GM10248 (cell line): ENCODE measurements at regions of chr11 and their contacts with region 1.

Region 1: DNA sequence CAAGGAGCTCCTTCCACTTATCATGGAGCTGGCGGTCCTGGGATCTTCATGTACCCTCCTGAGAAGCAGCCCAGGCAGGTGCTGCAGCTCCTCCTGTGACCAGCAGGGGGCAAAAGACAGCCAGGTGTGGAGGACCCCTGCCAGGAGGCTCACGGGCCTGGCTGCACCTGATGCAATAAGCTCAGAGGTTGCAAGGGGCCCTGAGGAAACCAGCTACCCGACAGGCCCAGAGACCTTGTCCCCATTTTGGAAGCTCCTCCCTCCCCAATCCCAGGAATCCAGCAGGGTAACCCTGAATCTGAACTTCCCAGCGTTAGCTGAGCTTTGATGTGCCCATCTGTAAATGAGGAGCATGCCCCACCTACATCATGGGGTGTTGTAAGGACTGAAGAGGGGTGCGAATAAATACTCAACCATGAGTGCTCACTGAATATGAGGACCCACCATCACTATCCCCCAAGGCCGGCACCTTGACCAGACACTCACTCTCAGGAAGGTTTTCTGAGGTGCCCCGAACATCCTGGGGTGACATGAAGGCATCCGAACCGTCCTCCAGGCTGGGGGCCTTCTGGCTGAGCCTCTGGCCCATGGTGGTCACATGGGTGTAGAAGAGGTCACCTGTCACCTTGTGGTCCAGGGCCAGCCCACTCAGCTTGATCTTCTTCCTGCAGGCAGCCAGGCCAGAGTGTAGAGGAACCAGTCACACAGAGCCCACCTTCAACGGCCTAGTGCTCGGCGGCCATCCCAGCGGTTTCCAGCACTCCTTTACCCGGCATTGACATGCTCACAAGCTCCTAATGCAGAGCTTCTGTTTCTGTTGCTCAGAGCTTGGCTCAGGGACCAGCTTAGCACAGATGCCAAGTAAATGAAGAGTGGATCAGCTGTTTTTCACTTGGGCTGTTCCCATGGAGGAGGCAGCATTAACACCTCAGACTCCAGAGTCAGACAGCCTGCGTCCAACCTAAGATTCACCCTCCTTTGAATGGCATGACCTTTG is 21.7 kb downstream of the SLC43A1 start:
- DNase-seq: peak; percentile 81
- CTCF ChIP-seq: peak; percentile 96

Region 2: DNA sequence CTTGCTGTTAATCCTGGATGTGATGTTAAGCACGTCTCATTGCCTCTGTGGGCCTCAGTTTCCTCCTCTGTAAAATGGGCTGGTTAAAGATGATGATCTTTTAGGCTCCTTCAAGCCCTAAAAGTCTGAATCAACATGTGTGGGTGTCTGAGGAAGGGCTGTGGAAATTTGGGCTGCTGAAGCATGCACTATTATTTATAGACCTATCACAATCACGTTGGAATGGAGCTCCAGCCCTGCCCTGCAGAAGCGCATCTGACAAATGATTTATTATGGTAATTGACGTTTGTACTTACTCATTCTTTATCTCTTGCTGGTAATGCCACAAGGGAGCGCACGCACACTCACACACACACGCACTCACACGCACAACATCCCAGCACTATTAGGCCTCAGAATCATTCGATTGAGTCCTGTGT is 135.3 kb before region 1 on chr11:
- CTCF ChIA-PET with region 1: interaction called, 13 read pairs
- POLR2A ChIA-PET with region 1: no interaction called
- DNase-seq: no peak
- CTCF ChIP-seq: no peak

Region 3: GRCh38 chr11:57456960-57457642 is 36.7 kb before region 1 on chr11:
- CTCF ChIA-PET with region 1: interaction called, 40 read pairs
- POLR2A ChIA-PET with region 1: no interaction called
- DNase-seq: peak; percentile 83
- CTCF ChIP-seq: peak; percentile 100

Region 4: GRCh38 chr11:57480409-57481137 is 13.2 kb before region 1 on chr11:
- CTCF ChIA-PET with region 1: interaction called, 75 read pairs
- POLR2A ChIA-PET with region 1: no interaction called
- DNase-seq: peak; percentile 80
- CTCF ChIP-seq: peak; percentile 88

Region 5: DNA sequence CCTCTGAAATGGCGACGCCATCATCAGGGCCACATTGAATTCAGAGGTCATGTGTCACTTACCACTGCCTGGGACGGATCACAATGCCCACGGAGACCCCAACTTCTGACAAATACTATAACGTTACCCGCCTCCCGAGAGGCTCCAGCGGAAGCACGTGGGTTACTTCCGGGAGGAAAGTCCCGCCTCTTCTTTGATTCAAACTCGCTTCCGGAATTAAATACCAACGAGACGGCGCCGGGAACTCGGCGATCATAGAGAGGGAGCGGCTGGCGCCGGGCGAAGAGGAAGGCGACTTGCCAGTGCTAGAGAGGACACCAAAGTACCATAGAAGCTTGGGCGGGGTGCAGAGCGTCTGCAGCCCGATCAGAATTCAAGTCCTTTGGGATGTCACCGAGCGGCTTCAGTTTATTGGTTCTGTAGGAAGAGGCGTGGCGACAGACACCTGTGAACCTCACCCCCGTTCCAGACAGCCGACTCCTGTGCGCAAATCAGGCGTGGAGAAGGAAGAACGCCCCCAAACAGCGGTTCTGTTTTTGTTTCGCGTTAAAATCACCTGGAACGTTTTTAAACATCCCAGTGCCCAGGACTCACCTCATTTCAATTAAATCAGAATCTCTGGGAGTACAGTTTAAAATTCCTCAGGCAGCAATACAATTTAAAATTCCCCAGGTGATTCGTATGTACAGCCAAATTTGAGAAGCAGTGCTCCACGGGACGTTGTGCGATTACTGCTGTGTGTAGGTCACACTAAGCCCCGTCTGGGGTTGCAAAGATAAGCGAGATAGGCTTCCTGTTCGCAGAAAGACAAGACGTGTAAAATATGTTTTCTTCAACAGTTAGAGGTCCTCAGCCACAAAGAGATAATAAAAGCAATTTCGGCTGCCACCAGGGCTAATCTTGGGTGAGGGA is 37.0 kb after region 1 on chr11 and contains the start of gene TIMM10:
- CTCF ChIA-PET with region 1: interaction called, 247 read pairs
- POLR2A ChIA-PET with region 1: no interaction called
- DNase-seq: peak; percentile 92
- CTCF ChIP-seq: no peak

Region 6: DNA sequence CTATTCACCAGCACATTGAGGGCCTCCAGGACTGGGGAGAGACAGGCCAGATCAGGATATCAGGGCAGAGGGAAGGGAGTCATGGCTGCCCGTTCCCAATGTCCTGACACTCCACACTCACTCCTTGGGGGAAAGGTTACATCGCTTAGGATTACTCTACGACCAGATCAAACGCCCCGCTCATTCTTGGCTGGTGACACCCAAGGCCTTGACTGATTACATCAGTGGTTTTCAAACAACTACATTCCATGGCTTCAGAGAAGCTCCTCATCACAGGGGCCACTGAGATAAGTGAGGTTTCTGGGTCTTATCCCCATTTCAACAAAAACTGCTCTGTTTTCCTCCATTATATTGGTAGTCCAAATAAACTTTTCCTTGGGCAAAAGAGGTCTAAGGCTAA is 58.7 kb after region 1 on chr11:
- CTCF ChIA-PET with region 1: interaction called, 10 read pairs
- POLR2A ChIA-PET with region 1: no interaction called
- DNase-seq: no peak
- CTCF ChIP-seq: no peak

Region 7: GRCh38 chr11:57619331-57619730 is 125.5 kb after region 1 on chr11:
- CTCF ChIA-PET with region 1: no interaction called
- POLR2A ChIA-PET with region 1: no interaction called
- DNase-seq: no peak
- CTCF ChIP-seq: no peak

Region 8: GRCh38 chr11:57638005-57638781 is 144.4 kb after region 1 on chr11:
- CTCF ChIA-PET with region 1: interaction called, 158 read pairs
- POLR2A ChIA-PET with region 1: no interaction called
- DNase-seq: peak; percentile 64
- CTCF ChIP-seq: no peak

Region 9: GRCh38 chr11:58165504-58166106 is 671.8 kb after region 1 on chr11:
- CTCF ChIA-PET with region 1: no interaction called
- POLR2A ChIA-PET with region 1: no interaction called
- DNase-seq: no peak
- CTCF ChIP-seq: no peak